CD8-positive, alpha-beta T cell (primary cell): ENCODE measurements at regions of chr11 and their contacts with region 1.

Region 1: GRCh38 chr11:71420455-71421241 is 27.5 kb downstream of the DHCR7 start:
- DNase-seq: peak in 2 of 9 experiments; percentile 17 to 30
- ATAC-seq: no peak
- H3K4me3 ChIP-seq: no peak overlapping the region
- H3K4me3 Mint-ChIP-seq: no peak overlapping the region
- H3K27ac ChIP-seq: no peak overlapping the region
- H3K27ac Mint-ChIP-seq: no peak overlapping the region
- H3K4me1 ChIP-seq: no peaks in the 10 kb centered on the region
- H3K4me1 Mint-ChIP-seq: no peaks in the 10 kb centered on the region
- H3K27me3 ChIP-seq: no peaks in the 10 kb centered on the region
- H3K27me3 Mint-ChIP-seq: no peaks in the 10 kb centered on the region
- CTCF ChIP-seq: no peak

Region 2: GRCh38 chr11:71477641-71478527 is 57.2 kb after region 1 on chr11:
- CTCF ChIA-PET with region 1: no interaction called
- POLR2A ChIA-PET with region 1: no interaction called
- intact Hi-C with region 1: loop called in 1 of 2 experiments (anchors 10 kb)
- DNase-seq: peak in 1 of 9 experiments; percentile 1
- ATAC-seq: no peak
- H3K4me3 ChIP-seq: no peak overlapping the region
- H3K4me3 Mint-ChIP-seq: no peak overlapping the region
- H3K27ac ChIP-seq: no peak overlapping the region
- H3K27ac Mint-ChIP-seq: no peak overlapping the region
- H3K4me1 ChIP-seq: no peaks in the 10 kb centered on the region
- H3K4me1 Mint-ChIP-seq: no peaks in the 10 kb centered on the region
- H3K27me3 ChIP-seq: no peaks in the 10 kb centered on the region
- H3K27me3 Mint-ChIP-seq: no peaks in the 10 kb centered on the region
- CTCF ChIP-seq: no peak